Naive thymus-derived CD4-positive, alpha-beta T cell (primary cell): ENCODE measurements at regions of chr14 and their contacts with region 1.

Region 1: GRCh38 chr14:58199726-58200479 is at the start of gene ACTR10:
- DNase-seq: peak; percentile 80 to 93 (median 88)
- ATAC-seq: peak; percentile 94
- H3K4me3 ChIP-seq: peak within 1 kb of the TSS; percentile 75
- H3K4me3 Mint-ChIP-seq: peak within 1 kb of the TSS; percentile 90 to 99 (median 97)
- H3K27ac ChIP-seq: peak within 1 kb of the TSS; percentile 87
- H3K27ac Mint-ChIP-seq: peak within 1 kb of the TSS; percentile 93 to 99 (median 98)
- H3K4me1 ChIP-seq: peaks cover 15 to 27% of the 10 kb centered on the region in 2 donors
- H3K4me1 Mint-ChIP-seq: peaks cover 21 to 60% (median 48%) of the 10 kb centered on the region in 7 donors
- H3K27me3 ChIP-seq: no peaks in the 10 kb centered on the region
- H3K27me3 Mint-ChIP-seq: peaks cover 0 to 7% (median 0%) of the 10 kb centered on the region in 5 donors
- total RNA-seq, gene ACTR10: 40.0 to 54.6 (median 50.4) TPM

Region 2: DNA sequence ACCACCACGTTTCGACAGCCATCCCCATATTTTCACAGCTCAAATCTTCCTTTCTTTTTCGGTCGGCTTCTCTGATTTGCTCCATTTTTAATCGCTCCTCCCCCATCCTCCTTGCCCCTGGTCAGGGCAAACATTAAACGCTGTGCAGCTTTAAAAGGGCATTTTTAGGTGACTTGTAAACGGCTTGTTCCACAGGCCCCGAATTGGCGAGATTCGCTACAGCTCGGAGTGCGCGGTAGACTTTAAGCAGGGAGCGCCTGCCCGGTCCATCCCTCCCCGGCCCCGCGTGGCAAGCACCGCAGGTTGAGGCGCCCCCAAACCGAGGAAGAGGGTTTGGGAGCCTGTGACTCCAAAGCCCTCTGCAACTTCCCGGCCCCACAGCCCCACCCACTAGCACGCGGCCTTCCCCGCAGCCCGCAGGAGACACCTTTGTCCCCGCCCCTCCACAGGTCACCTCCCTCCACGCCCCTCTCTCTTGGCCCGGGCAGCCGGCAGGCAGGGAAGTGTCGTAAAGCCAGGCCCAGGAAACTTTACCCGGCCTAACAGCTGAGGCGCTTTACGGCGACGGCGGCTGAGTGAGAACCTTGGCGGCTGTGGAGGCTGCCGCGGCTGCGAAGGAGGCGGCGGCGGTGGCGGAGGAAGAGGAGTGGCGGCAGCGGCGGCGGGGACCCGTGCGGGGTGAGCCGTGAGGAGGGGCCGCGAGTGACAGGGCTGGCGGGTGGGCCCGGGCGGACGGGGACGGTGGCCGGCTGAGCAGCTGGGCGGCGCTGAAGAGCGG is 809.7 kb before region 1 on chr14 and contains the start of gene NAA30:
- CTCF ChIA-PET with region 1: no interaction called
- POLR2A ChIA-PET with region 1: interaction called, 3 read pairs
- intact Hi-C with region 1: loop called (anchors 1 to 2 kb)
- DNase-seq: peak; percentile 80 to 97 (median 92)
- ATAC-seq: peak; percentile 98
- H3K4me3 ChIP-seq: peak within 1 kb of the TSS; percentile 68
- H3K4me3 Mint-ChIP-seq: peak within 1 kb of the TSS; percentile 86 to 98 (median 94)
- H3K27ac ChIP-seq: peak within 1 kb of the TSS; percentile 72
- H3K27ac Mint-ChIP-seq: peak within 1 kb of the TSS; percentile 88 to 99 (median 95)
- H3K4me1 ChIP-seq: peaks cover 11 to 13% of the 10 kb centered on the region in 2 donors
- H3K4me1 Mint-ChIP-seq: peaks cover 31 to 58% (median 40%) of the 10 kb centered on the region in 7 donors
- H3K27me3 ChIP-seq: no peaks in the 10 kb centered on the region
- H3K27me3 Mint-ChIP-seq: peaks cover 0 to under 1% (median 0%) of the 10 kb centered on the region in 5 donors
- total RNA-seq, gene NAA30: 14.6 to 19.6 (median 16.2) TPM

Region 3: DNA sequence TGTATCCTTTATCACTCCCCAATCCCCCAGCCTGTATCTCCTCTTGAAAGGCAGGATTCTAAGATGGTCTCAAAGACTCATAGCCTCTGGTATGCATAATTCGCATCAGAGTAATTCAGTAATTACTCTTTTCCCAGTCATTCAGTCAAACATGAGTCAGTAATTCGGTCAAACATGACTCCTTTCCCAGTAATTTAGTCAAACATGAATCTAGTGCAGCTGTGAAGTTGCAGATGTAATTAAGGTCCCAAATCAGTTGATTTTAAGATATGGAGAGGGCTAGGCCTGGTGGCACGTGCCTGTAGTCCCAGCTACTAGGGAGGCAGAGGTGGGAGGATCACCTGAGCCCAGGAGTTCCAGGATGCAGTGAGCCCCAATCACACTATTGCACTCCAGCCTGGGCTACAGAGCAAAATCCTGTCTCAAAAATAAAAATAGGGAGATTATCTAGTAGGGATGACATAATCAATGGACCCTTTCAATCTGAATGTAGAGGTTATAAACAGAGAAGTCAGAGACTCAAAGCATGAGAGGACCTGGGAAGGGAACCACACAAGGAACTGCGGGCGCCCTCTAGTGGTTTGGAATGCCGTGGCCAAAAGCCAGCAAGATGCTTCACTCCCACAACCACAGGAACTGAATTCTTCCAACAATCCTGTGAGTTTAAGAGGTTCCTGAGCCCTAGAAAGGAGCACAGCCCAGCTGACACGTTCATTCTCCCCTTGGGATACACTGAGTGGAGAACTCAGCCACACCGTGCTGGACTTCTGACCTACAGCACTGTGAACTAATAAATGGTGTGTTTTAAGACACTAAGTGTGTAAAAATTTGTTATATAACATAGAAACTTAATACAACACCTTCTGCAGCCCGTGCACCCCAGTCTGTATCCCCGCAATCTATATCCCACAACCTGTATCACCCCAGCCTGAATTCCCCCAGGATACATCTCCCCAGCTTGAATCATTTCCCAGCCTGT is 33.6 kb before region 1 on chr14:
- CTCF ChIA-PET with region 1: no interaction called
- POLR2A ChIA-PET with region 1: no interaction called
- intact Hi-C with region 1: loop called in 1 of 2 experiments (anchors 1 kb)
- DNase-seq: peak; percentile 18 to 70 (median 53)
- ATAC-seq: peak; percentile 73
- H3K4me3 ChIP-seq: no peak overlapping the region
- H3K4me3 Mint-ChIP-seq: no peak overlapping the region
- H3K27ac ChIP-seq: no peak overlapping the region
- H3K27ac Mint-ChIP-seq: no peak overlapping the region
- H3K4me1 ChIP-seq: no peaks in the 10 kb centered on the region
- H3K4me1 Mint-ChIP-seq: peaks cover 0 to 4% (median 0%) of the 10 kb centered on the region in 7 donors
- H3K27me3 ChIP-seq: no peaks in the 10 kb centered on the region
- H3K27me3 Mint-ChIP-seq: peaks cover 11 to 30% (median 15%) of the 10 kb centered on the region in 5 donors

Region 4: DNA sequence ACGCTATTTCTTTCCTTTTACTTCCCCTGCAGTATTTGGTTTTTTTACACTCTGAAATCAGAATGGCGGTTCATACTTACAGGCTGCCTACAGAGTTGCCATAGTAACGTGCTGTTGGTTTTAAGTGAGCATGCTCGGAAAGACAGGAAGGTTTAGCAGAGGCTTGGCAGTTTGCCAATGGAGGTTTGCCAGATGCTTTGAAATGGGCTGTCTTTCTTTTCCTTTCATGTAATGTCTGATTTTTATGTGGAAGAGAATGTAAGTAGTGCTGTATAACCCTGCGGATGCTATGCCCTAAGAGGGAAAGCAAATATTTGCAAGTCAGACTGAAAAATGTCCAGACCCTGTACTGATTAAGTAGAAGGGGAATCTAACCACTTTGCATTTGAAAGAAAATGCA is 131.2 kb after region 1 on chr14:
- CTCF ChIA-PET with region 1: no interaction called
- POLR2A ChIA-PET with region 1: interaction called, 3 read pairs
- intact Hi-C with region 1: loop called (anchors 1 kb)
- DNase-seq: peak; percentile 61 to 98 (median 95)
- ATAC-seq: peak; percentile 97
- H3K4me3 ChIP-seq: peak overlapping the region; percentile 17
- H3K4me3 Mint-ChIP-seq: peak overlapping the region; percentile 38 to 85 (median 76)
- H3K27ac ChIP-seq: peak overlapping the region; percentile 72
- H3K27ac Mint-ChIP-seq: peak overlapping the region; percentile 84 to 97 (median 94)
- H3K4me1 ChIP-seq: peaks cover 5 to 9% of the 10 kb centered on the region in 2 donors
- H3K4me1 Mint-ChIP-seq: peaks cover 17 to 42% (median 32%) of the 10 kb centered on the region in 7 donors
- H3K27me3 ChIP-seq: no peaks in the 10 kb centered on the region
- H3K27me3 Mint-ChIP-seq: no peaks in the 10 kb centered on the region

Region 5: DNA sequence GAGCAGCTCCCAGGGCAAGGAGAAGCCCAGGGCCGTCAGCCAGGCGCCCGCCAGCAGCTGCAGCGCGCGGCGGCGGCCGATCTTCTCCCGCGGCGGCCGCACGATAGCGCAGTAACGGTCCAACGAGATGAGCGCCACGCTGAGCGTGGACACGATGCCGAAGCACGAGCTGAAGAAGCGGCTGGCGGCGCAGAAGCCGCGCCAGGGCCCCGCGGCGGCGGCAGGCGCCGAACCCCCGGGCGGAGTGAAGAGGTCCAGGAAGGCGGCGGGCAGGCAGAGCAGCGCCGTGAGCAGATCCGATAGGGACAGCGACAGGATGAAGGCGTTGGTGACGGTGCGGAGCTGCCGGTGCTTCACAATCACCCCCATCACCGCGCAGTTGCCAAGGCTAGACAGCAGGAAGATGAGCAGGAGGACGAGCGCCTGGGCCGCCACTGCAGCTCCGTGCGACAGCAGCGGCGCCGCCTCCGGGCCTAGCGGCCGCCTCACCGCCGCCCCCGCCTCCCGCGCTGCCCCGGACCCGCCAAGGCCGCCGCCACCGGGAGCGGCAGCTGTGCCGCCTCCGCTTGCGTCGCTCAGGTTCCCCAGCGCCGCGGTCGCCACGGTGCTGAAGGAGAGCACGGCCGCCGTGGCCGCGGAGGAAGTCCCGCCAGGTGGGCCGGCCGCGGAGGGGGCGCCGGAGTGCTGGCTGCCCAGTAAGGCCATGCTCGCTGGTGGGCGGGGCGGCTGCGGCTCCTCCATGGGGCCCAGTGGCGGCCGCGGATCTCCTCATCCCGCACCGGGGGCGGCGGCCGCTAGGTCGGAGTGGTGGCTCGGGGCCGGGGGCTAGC is 1264.8 kb after region 1 on chr14:
- CTCF ChIA-PET with region 1: no interaction called
- POLR2A ChIA-PET with region 1: interaction called, 3 read pairs
- intact Hi-C with region 1: loop called in 1 of 2 experiments (anchors 5 kb)
- DNase-seq: peak; percentile 40 to 71 (median 59)
- ATAC-seq: peak; percentile 78
- H3K4me3 ChIP-seq: peak overlapping the region; percentile 66
- H3K4me3 Mint-ChIP-seq: peak overlapping the region; percentile 85 to 94 (median 90)
- H3K27ac ChIP-seq: peak overlapping the region; percentile 65
- H3K27ac Mint-ChIP-seq: peak overlapping the region in 5 of 9 donors; percentile 60 to 82 (median 72)
- H3K4me1 ChIP-seq: peaks cover 0 to 9% of the 10 kb centered on the region in 2 donors
- H3K4me1 Mint-ChIP-seq: peaks cover 0 to 17% (median 7%) of the 10 kb centered on the region in 7 donors
- H3K27me3 ChIP-seq: no peaks in the 10 kb centered on the region
- H3K27me3 Mint-ChIP-seq: peaks cover 8 to 16% (median 12%) of the 10 kb centered on the region in 5 donors